Activated T-helper 1 cell treated with anti-CD3 and anti-CD28 coated beads, Interleukin-12 subunit alpha, Interleukin-12 subunit beta, Interleukin-2, Interleukin-4 antibody, amounts not matched to agents 30 ng/mL and 10 ng/mL and 1 ng/mL, durations not matched to agents 14 hours and 24 hours and 36 hours (primary cell): ENCODE measurements at regions of chr7 and their contacts with region 1.

Region 1: DNA sequence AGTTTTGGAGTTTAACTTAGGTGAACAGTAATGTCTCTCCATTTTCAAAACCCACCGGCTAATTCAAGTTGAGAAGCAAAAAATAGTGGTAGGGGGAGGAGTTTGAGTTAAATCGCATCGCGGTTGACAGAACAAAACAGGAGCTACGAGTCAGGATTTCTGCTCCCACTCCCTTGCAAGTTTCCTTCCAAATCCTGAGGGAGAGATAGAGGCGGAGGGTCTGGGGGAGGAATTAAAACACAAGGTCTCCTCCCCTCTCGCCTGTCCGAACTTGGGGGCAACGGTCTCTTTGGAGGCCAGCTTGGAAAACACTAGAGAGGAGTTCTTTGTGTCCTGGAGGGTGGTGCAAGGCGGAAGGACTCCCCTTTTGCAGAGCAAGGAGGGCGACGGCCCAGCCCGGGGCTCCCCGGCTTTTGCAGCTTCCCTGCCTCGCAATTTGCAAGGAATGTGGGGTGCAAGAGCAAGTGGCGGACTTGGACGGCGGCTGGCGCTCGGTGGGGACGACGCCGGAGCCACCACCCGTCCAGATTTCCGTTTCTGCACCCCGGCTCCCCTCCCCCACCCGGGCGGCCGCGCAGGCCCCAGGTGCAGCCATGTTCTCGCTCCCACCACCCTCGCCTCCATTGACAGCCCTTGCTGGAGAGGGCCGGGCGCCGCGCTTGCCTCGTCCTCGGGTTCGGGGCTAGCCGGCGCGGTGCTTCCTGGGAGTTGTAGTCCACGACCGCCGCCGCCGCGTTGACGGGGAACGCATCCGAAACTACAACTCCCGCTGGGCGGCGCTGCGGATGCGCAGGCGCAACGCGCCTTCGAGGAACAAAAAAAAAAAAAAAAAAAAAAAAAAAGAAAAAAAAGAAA is 454 bp upstream of the GTF2I start:
- DNase-seq: peak; percentile 97
- H3K4me3 Mint-ChIP-seq: peak overlapping the region; percentile 85
- H3K27ac Mint-ChIP-seq: peak overlapping the region; percentile 93
- H3K4me1 Mint-ChIP-seq: peaks cover 48% of the 10 kb centered on the region
- H3K27me3 Mint-ChIP-seq: peaks cover 6% of the 10 kb centered on the region

Region 2: GRCh38 chr7:74083117-74083876 is 573.8 kb before region 1 on chr7 and contains the start of gene LIMK1:
- intact Hi-C with region 1: loop called (anchors 10 kb)
- DNase-seq: peak; percentile 78
- H3K4me3 Mint-ChIP-seq: peak within 1 kb of the TSS; percentile 88
- H3K27ac Mint-ChIP-seq: peak within 1 kb of the TSS; percentile 89
- H3K4me1 Mint-ChIP-seq: peaks cover 12% of the 10 kb centered on the region
- H3K27me3 Mint-ChIP-seq: peaks cover 2% of the 10 kb centered on the region
- total RNA-seq, gene LIMK1: 24.3 and 25.2 TPM in 2 replicates

Region 3: DNA sequence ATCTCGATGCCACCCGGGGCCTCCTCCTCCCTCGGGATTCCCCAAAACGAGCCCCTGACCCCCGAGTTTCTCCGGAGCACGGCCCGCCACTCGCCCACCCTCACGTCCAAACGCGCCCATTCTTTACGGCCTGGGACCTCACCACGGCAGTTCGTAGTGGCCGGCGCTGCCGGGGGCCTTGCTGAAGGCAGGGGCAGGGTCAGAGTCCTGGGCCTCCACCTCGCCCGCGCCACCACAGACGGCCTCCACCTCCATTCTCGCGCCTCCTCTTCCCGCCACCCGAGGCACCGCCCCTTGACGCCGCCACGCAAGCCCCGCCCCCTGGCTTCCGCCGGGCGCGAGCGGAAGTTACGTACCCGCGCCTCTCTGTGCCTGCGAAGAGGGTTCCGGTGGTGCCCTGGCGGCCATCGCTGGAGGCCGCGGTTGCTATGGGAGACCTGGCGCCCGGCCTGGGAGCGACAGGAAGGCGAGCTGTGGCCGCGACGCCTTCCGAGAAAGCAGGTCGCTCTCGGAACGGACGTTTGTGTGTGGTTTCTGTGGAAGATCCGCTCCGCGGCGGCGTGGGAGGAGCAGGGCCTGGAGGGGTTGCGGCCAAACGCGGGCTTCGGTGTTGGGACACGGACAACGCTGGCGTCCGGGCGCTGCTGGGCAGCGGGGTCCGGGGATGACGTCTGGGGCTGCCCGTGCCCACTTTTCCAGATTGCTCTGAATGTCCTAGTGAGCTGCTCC is 402.8 kb before region 1 on chr7 and contains the start of gene RFC2:
- intact Hi-C with region 1: loop called (anchors 2 kb)
- DNase-seq: peak; percentile 98
- H3K4me3 Mint-ChIP-seq: peak within 1 kb of the TSS; percentile 95
- H3K27ac Mint-ChIP-seq: peak within 1 kb of the TSS; percentile 95
- H3K4me1 Mint-ChIP-seq: peaks cover 21% of the 10 kb centered on the region
- H3K27me3 Mint-ChIP-seq: no peaks in the 10 kb centered on the region
- total RNA-seq, gene RFC2: 87.3 and 89.1 TPM in 2 replicates

Region 4: GRCh38 chr7:74449809-74450397 is 207.2 kb before region 1 on chr7:
- intact Hi-C with region 1: loop called (anchors 10 kb)
- DNase-seq: peak; percentile 47
- H3K4me3 Mint-ChIP-seq: no peak overlapping the region
- H3K27ac Mint-ChIP-seq: no peak overlapping the region
- H3K4me1 Mint-ChIP-seq: peaks cover 12% of the 10 kb centered on the region
- H3K27me3 Mint-ChIP-seq: peaks cover 12% of the 10 kb centered on the region

Region 5: GRCh38 chr7:74672343-74672915 is 15.4 kb after region 1 on chr7:
- intact Hi-C with region 1: loop called (anchors 2 kb)
- DNase-seq: no peak
- H3K4me3 Mint-ChIP-seq: no peak overlapping the region
- H3K27ac Mint-ChIP-seq: no peak overlapping the region
- H3K4me1 Mint-ChIP-seq: peaks cover 14% of the 10 kb centered on the region
- H3K27me3 Mint-ChIP-seq: no peaks in the 10 kb centered on the region